Activated naive CD4-positive, alpha-beta T cell treated with anti-CD3 and anti-CD28 coated beads for 36 hours (primary cell): ENCODE measurements at regions of chr7 and their contacts with region 1.

Region 1: GRCh38 chr7:113710310-113711106 is 208.3 kb downstream of the PPP1R3A start:
- DNase-seq: peak; percentile 56
- H3K4me3 Mint-ChIP-seq: no peak overlapping the region
- H3K27ac Mint-ChIP-seq: no peak overlapping the region
- H3K4me1 Mint-ChIP-seq: no peaks in the 10 kb centered on the region
- H3K27me3 Mint-ChIP-seq: peaks cover 10% of the 10 kb centered on the region

Region 2: GRCh38 chr7:113159746-113160339 is 550.7 kb before region 1 on chr7:
- CTCF ChIA-PET with region 1: no interaction called
- intact Hi-C with region 1: loop called (anchors 2 kb)
- DNase-seq: peak; percentile 10
- H3K4me3 Mint-ChIP-seq: no peak overlapping the region
- H3K27ac Mint-ChIP-seq: no peak overlapping the region
- H3K4me1 Mint-ChIP-seq: no peaks in the 10 kb centered on the region
- H3K27me3 Mint-ChIP-seq: peaks cover 10% of the 10 kb centered on the region

Region 3: GRCh38 chr7:113404245-113404644 is 306.3 kb before region 1 on chr7:
- CTCF ChIA-PET with region 1: no interaction called
- intact Hi-C with region 1: loop called (anchors 5 kb)
- DNase-seq: no peak
- H3K4me3 Mint-ChIP-seq: no peak overlapping the region
- H3K27ac Mint-ChIP-seq: no peak overlapping the region
- H3K4me1 Mint-ChIP-seq: no peaks in the 10 kb centered on the region
- H3K27me3 Mint-ChIP-seq: peaks cover 19% of the 10 kb centered on the region